ENCODE measurements at regions of chrX and their contacts with region 1.

Region 1: DNA sequence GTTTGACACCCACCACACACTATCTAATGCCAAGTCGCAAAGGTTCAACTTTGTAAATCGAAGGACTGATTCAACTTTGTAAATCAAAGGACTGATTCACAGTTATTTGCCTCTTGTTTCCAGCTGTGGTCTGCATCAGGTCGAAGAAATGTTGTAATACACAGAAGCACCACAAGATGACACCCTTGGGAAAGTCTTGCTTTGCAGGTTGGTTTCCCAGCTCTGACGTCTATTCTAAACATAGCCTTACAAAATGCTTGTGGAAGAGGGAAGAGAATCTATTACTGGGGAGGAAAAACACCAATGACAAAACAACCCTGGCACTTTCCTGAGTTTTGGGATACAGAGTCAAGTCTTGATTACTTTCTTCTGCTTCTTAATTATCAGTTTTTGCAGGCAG is 35.3 kb downstream of the SUPT20HL1 start:
- DNase-seq: peak; percentile 54
- CTCF ChIP-seq: peak; percentile 46

Region 2: GRCh38 chrX:24166078-24166477 is 229.7 kb before region 1 on chrX:
- CTCF ChIA-PET with region 1: no interaction called
- POLR2A ChIA-PET with region 1: no interaction called
- DNase-seq: no peak
- CTCF ChIP-seq: no peak

Region 3: GRCh38 chrX:24364851-24365538 is 30.8 kb before region 1 on chrX:
- CTCF ChIA-PET with region 1: no interaction called
- POLR2A ChIA-PET with region 1: no interaction called
- DNase-seq: no peak
- CTCF ChIP-seq: no peak

Region 4: GRCh38 chrX:24412637-24413363 is 17.0 kb after region 1 on chrX:
- CTCF ChIA-PET with region 1: interaction called, 10 read pairs
- POLR2A ChIA-PET with region 1: no interaction called
- DNase-seq: no peak
- CTCF ChIP-seq: no peak

Region 5: GRCh38 chrX:24561121-24561520 is 165.3 kb after region 1 on chrX:
- CTCF ChIA-PET with region 1: interaction called, 25 read pairs
- POLR2A ChIA-PET with region 1: no interaction called
- DNase-seq: peak; percentile 50
- CTCF ChIP-seq: no peak

Measured in GM10248 (cell line).